Transverse colon (tissue), 4 donors: ENCODE measurements at regions of chr2 and their contacts with region 1.

Region 1: GRCh38 chr2:65186872-65187851 is 40.5 kb upstream of the ACTR2 start:
- DNase-seq: peak; percentile 89
- H3K4me3 ChIP-seq: peak overlapping the region in 1 of 4 donors; percentile 13
- H3K27ac ChIP-seq: peak overlapping the region; percentile 68 to 83 (median 76)
- H3K4me1 ChIP-seq: peaks cover 5 to 25% (median 13%) of the 10 kb centered on the region in 4 donors
- H3K27me3 ChIP-seq: no peaks in the 10 kb centered on the region
- CTCF ChIP-seq: peak; percentile 74 to 88 (median 84)
- EP300 ChIP-seq: no peak
- POLR2A ChIP-seq: no peak

Region 2: DNA sequence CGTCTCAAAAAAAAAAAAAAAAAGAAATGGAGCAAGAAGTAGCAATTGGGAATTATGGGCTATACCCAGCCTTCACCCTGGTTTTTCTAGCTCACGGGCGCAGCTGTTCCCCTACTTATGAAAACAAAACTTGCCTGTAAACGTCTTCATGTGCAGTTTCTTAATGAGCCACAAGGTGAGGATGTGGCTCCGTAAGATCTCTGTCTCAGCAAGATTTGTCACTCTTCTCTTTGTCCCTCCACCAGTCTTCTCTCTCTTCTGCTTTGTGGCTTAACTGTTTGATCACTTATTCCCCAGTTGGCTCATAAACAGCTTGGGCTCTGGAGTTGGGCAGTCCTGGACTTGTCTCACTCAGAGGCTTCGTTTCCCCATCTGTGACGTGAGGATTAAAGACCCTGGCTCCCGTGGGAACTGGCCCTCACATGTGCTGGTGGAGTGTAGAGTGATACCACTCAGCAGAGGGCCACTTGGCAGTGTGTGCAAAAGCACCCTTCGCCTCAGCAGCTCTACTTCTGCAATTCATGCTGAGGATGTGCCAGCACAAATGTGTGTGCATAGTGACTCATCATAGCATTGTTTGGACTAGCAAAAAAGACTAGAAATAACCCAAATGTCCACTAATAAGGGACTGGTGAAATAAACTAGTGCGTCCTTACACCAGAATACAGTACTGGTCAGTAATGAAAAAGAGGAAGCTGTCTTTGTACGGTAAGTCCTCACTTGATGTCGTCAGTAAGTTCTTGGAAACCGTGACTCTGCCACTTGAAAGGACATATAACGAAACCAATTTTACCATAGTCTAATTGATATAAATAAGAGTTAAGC is 122.2 kb before region 1 on chr2:
- in situ Hi-C with region 1: loop called in 3 of 4 experiments (anchors 10 to 25 kb)
- intact Hi-C with region 1: no loop called
- DNase-seq: peak; percentile 54
- H3K4me3 ChIP-seq: no peak overlapping the region
- H3K27ac ChIP-seq: peak overlapping the region; percentile 51 to 74 (median 68)
- H3K4me1 ChIP-seq: peaks cover 11 to 73% (median 28%) of the 10 kb centered on the region in 4 donors
- H3K27me3 ChIP-seq: no peaks in the 10 kb centered on the region
- CTCF ChIP-seq: peak; percentile 66 to 95 (median 76)
- EP300 ChIP-seq: no peak
- POLR2A ChIP-seq: no peak